Activated CD8-positive, alpha-beta T cell treated with anti-CD3 and anti-CD28 coated beads, Interleukin-2, amount 10 ng/mL, durations not matched to agents 7 days and 5 days (primary cell): ENCODE measurements at regions of chr19 and their contacts with region 1.

Region 1: GRCh38 chr19:38849860-38850435 is at the start of gene HNRNPL:
- DNase-seq: peak; percentile 100
- ATAC-seq: peak; percentile 73
- H3K4me3 Mint-ChIP-seq: peak within 1 kb of the TSS; percentile 95
- H3K27ac Mint-ChIP-seq: peak within 1 kb of the TSS; percentile 100
- H3K4me1 Mint-ChIP-seq: peaks cover 52% of the 10 kb centered on the region
- H3K27me3 Mint-ChIP-seq: no peaks in the 10 kb centered on the region
- total RNA-seq, gene HNRNPL: 509 to 553 TPM

Region 2: GRCh38 chr19:38831142-38831605 is 18.8 kb before region 1 on chr19:
- CTCF ChIA-PET with region 1: interaction called, 6 read pairs
- POLR2A ChIA-PET with region 1: interaction called, 27 read pairs
- DNase-seq: peak; percentile 51
- ATAC-seq: peak; percentile 35
- H3K4me3 Mint-ChIP-seq: peak overlapping the region; percentile 92
- H3K27ac Mint-ChIP-seq: peak overlapping the region; percentile 88
- H3K4me1 Mint-ChIP-seq: peaks cover 33% of the 10 kb centered on the region
- H3K27me3 Mint-ChIP-seq: no peaks in the 10 kb centered on the region

Region 3: GRCh38 chr19:38838573-38839269 is 11.2 kb before region 1 on chr19:
- CTCF ChIA-PET with region 1: interaction called, 3 read pairs
- POLR2A ChIA-PET with region 1: interaction called, 27 read pairs
- DNase-seq: peak; percentile 28
- ATAC-seq: no peak
- H3K4me3 Mint-ChIP-seq: no peak overlapping the region
- H3K27ac Mint-ChIP-seq: peak overlapping the region; percentile 55
- H3K4me1 Mint-ChIP-seq: peaks cover 55% of the 10 kb centered on the region
- H3K27me3 Mint-ChIP-seq: no peaks in the 10 kb centered on the region

Region 4: DNA sequence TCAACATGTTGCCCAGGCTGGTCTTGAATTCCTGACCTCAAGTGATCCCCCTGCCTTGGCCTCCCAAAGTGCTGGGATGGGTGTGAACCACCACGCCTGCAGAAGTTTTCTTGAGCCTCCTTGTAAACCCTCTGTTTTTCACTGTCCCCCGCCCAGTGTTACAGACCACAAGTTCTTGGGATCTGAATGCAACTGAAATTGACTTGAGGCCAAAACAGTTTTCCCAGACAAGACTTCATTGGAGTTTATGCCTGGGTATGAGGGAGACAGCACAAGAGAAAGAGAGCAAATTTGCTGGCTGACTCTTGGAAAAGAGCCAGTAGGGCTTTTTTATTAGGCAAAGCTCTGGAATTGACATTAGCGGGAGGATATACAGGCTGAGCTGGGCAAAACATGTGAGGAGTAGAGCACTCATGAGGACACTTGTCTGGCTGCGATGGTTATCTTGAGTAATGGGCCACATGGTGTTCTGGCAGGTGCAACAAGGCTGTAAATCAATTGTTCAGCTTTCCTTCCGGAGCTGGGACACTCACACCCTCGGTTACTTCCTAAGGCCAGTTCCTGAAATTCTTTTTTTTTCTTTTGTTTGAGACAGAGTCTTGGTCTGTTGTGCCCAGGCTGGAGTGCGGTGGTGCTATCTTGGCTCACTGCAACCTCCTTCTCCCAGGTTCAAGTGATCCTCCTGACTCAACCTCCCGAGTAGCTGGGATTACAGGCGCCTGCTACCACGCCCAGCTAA is 12.5 kb after region 1 on chr19:
- CTCF ChIA-PET with region 1: interaction called, 8 read pairs
- POLR2A ChIA-PET with region 1: interaction called, 11 read pairs
- DNase-seq: no peak
- ATAC-seq: no peak
- H3K4me3 Mint-ChIP-seq: no peak overlapping the region
- H3K27ac Mint-ChIP-seq: no peak overlapping the region
- H3K4me1 Mint-ChIP-seq: peaks cover 52% of the 10 kb centered on the region
- H3K27me3 Mint-ChIP-seq: no peaks in the 10 kb centered on the region

Region 5: GRCh38 chr19:38869856-38870607 is 20.1 kb after region 1 on chr19:
- CTCF ChIA-PET with region 1: interaction called, 7 read pairs
- POLR2A ChIA-PET with region 1: interaction called, 10 read pairs
- DNase-seq: peak; percentile 94
- ATAC-seq: peak; percentile 94
- H3K4me3 Mint-ChIP-seq: peak overlapping the region; percentile 79
- H3K27ac Mint-ChIP-seq: peak overlapping the region; percentile 86
- H3K4me1 Mint-ChIP-seq: peaks cover 54% of the 10 kb centered on the region
- H3K27me3 Mint-ChIP-seq: no peaks in the 10 kb centered on the region

Region 6: DNA sequence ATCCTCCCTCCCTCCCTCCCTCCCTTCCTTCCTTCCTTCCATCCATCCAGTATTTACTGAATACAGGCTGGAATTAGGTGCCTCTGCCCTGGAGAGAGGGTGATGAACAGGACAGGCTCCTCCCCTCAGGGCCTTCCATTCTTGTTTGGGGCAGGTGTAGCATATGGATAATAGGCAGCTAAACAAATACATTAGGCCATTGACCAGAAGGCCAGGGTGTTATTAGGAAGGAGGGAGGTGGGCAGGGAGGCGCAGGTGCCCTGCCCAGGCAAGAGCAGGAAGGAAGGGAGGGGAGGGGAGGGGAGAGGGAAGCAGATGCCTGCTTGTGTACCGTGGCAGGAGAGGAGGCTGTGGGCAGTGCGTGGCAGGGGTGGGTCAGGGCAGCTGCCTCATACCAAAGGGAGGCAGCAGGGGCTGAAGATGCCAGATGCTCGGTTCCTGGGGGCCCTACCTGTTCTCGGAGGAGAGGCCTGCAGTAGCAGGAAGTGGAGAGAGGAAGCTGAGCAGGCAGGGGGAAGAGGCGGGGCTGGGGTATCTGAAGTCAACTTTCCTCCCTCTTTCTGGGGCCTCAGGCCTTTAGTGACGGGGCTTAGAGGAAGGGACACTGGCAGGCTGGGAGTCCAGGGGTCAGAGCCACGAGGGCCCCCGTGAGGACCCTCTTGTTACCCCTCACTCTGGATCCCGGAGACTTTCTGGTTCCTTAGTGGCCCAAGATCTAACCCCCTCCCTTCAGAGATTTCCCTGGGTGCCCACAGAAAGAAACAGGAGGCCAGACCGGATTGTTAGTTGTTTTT is 28.0 kb after region 1 on chr19 and contains the start of gene RINL:
- CTCF ChIA-PET with region 1: interaction called, 5 read pairs
- POLR2A ChIA-PET with region 1: interaction called, 25 read pairs
- DNase-seq: peak; percentile 84
- ATAC-seq: peak; percentile 92
- H3K4me3 Mint-ChIP-seq: peak within 1 kb of the TSS; percentile 95
- H3K27ac Mint-ChIP-seq: peak within 1 kb of the TSS; percentile 98
- H3K4me1 Mint-ChIP-seq: peaks cover 37% of the 10 kb centered on the region
- H3K27me3 Mint-ChIP-seq: no peaks in the 10 kb centered on the region
- total RNA-seq, gene RINL: 58.9 to 63.5 TPM

Region 7: DNA sequence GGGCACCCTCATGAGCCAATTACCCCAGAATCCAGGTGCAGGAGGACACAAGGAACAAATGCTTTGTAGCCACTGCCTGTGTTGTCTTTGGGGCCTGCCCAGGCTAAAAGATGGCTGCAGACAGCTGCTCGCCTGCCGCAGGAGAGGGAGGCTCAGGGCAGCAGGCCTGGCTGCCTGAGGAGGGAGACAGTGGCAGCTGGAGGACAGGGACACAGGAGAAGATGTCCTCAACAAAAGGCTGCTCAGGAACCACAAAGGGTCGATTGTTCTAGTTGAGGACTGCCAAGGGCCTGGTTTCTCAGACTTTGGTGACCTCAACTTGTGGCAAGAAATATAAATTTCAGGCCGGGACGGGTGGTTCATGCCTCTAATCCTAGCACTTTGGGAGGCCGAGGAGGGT is 41.8 kb after region 1 on chr19:
- CTCF ChIA-PET with region 1: interaction called, 12 read pairs
- POLR2A ChIA-PET with region 1: no interaction called
- DNase-seq: no peak
- ATAC-seq: no peak
- H3K4me3 Mint-ChIP-seq: no peak overlapping the region
- H3K27ac Mint-ChIP-seq: no peak overlapping the region
- H3K4me1 Mint-ChIP-seq: peaks cover 4% of the 10 kb centered on the region
- H3K27me3 Mint-ChIP-seq: no peaks in the 10 kb centered on the region